Activated CD4-positive, alpha-beta T cell treated with anti-CD3 and anti-CD28 coated beads for 36 hours (primary cell): ENCODE measurements at regions of chr20 and their contacts with region 1.

Region 1: DNA sequence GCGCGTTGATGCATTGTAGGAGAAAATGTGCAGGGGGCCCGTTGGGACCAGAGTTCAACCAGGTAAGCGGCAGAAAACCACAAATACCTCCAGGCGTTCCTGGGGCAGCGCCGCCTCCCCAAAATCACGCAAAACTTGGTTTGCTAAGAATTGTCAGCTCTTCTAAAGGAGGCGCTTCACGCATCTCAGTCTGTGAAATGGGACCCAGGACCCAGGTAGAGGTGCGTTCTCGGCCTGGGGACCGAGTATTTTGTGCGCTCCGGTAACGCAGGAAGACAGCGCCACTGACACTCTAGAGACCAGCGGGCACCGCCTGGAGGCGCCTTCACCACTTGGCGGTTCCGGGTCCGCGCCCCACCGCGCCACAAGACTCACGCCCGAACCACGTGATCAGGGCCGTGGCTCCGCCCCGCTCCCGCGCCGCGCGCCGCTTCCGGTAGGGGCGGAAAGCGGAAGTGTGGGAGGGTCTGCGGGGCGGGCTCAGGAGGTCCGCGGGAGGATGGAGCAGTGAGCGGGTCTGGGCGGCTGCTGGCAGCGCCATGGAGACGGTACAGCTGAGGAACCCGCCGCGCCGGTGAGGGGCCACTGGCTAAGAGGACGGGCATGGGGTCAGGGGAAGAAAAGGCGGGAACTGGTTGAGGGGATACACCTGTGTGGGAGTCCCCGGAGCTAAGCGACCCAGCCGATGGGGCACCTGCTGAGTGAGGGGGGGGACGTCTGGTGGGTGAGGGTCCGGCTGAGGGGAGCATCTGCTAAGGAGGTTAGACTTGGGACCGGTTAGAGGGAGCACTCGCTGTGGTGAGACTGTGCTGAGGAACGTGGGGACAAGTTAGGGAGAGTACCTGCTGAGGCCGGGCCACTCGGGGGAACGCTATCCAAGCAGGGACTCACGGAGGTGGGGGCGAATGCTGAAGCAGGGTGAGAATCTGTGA is at the start of gene STK4:
- DNase-seq: peak; percentile 97
- ATAC-seq: peak; percentile 71
- H3K4me3 Mint-ChIP-seq: peak within 1 kb of the TSS; percentile 94
- H3K27ac Mint-ChIP-seq: peak within 1 kb of the TSS; percentile 98
- H3K4me1 Mint-ChIP-seq: peaks cover 55% of the 10 kb centered on the region
- H3K27me3 Mint-ChIP-seq: no peaks in the 10 kb centered on the region
- total RNA-seq, gene STK4: 156 to 164 TPM

Region 2: GRCh38 chr20:44521484-44522481 is 444.5 kb before region 1 on chr20 and contains the start of gene SERINC3:
- CTCF ChIA-PET with region 1: no interaction called
- POLR2A ChIA-PET with region 1: no interaction called
- intact Hi-C with region 1: loop called in 1 of 2 experiments (anchors 5 kb)
- DNase-seq: peak; percentile 98
- ATAC-seq: peak; percentile 99
- H3K4me3 Mint-ChIP-seq: peak within 1 kb of the TSS; percentile 81
- H3K27ac Mint-ChIP-seq: peak within 1 kb of the TSS; percentile 93
- H3K4me1 Mint-ChIP-seq: peaks cover 55% of the 10 kb centered on the region
- H3K27me3 Mint-ChIP-seq: no peaks in the 10 kb centered on the region
- total RNA-seq, gene SERINC3: 51.9 to 58.5 TPM

Region 3: DNA sequence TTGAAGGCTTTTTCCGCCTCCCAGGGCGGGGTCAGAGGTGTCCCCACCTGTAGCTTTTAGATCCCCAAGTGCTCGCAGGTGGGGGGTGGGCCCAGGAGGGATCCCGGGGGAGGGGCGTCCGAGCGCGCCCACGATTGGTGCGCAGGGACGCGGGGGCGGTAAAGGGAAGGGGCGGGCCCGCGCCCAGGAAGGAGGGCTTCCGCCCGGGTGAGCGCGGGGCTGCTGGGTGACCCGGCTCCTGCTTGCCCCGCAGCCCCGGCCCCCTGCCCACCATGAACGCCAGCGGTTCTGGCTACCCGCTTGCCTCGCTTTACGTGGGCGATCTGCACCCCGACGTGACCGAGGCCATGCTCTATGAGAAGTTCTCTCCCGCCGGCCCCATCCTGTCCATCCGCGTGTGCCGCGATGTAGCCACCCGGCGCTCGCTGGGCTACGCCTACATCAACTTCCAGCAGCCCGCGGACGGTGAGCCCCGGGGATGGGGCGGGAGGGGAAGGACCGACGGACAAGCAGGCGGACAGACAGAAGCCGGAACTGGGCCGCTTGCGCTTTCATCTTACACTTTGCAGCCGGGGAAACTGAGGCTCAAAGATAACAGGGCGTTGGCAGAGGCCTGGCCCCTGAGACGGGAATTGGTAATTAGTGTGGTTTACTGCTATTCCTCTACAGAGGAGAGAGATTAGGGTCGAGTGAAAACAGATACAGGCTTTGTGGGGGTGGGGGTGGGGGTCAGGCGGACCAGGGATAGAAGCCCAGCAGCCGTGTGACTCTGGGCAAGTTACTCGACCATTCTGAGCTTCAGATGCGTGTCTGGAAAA is 56.2 kb before region 1 on chr20 and contains the start of gene PABPC1L:
- CTCF ChIA-PET with region 1: no interaction called
- POLR2A ChIA-PET with region 1: interaction called, 5 read pairs
- intact Hi-C with region 1: loop called in 1 of 2 experiments (anchors 5 kb)
- DNase-seq: peak; percentile 86
- ATAC-seq: peak; percentile 90
- H3K4me3 Mint-ChIP-seq: peak within 1 kb of the TSS; percentile 78
- H3K27ac Mint-ChIP-seq: peak within 1 kb of the TSS; percentile 64
- H3K4me1 Mint-ChIP-seq: peaks cover 34% of the 10 kb centered on the region
- H3K27me3 Mint-ChIP-seq: no peaks in the 10 kb centered on the region
- total RNA-seq, gene PABPC1L: 61.7 to 71.3 TPM

Region 4: DNA sequence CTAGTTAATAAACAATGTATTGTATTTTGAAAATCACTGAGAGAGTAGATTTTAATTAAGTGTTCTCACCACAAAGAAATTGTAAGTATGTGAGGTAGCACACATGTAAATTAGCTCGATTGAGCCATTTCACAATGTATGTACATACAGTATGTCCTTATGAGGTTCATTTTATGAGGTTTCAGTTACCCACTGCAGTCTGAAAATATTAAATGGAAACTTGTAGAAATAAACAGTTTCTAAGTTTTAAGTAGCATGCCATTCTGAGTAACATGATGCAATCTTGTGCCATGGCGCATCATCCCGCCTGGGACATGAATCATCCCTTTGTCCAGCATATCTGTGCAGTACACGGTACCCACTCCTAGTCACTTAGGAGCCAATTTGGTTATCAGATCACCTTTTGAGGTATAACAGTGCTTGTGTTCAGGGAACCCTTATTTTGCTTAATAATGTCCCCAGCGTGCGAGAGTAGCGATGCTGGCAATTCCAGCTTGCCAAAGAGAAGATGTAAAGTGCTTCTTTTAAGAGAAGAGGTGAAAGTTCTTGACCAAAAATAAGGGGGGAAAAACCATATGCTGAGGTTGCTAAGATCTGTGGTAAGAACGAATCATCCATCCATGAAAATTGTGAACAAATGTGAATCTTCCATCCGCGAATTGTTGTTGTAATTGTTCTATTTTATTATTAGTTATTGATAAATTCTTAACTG is 69.9 kb after region 1 on chr20:
- CTCF ChIA-PET with region 1: interaction called, 4 read pairs
- POLR2A ChIA-PET with region 1: no interaction called
- intact Hi-C with region 1: loop called (anchors 2 to 5 kb)
- DNase-seq: peak; percentile 83
- ATAC-seq: peak; percentile 89
- H3K4me3 Mint-ChIP-seq: no peak overlapping the region
- H3K27ac Mint-ChIP-seq: peak overlapping the region; percentile 95
- H3K4me1 Mint-ChIP-seq: peaks cover 80% of the 10 kb centered on the region
- H3K27me3 Mint-ChIP-seq: no peaks in the 10 kb centered on the region

Region 5: GRCh38 chr20:45415774-45416637 is 449.7 kb after region 1 on chr20 and contains the start of gene PIGT:
- CTCF ChIA-PET with region 1: no interaction called
- POLR2A ChIA-PET with region 1: no interaction called
- intact Hi-C with region 1: loop called in 1 of 2 experiments (anchors 5 kb)
- DNase-seq: peak; percentile 93
- ATAC-seq: peak; percentile 93
- H3K4me3 Mint-ChIP-seq: peak within 1 kb of the TSS; percentile 94
- H3K27ac Mint-ChIP-seq: peak within 1 kb of the TSS; percentile 97
- H3K4me1 Mint-ChIP-seq: peaks cover 44% of the 10 kb centered on the region
- H3K27me3 Mint-ChIP-seq: no peaks in the 10 kb centered on the region
- total RNA-seq, gene PIGT: 44.0 to 65.7 TPM

Region 6: GRCh38 chr20:45487231-45487635 is 520.9 kb after region 1 on chr20:
- CTCF ChIA-PET with region 1: no interaction called
- POLR2A ChIA-PET with region 1: no interaction called
- intact Hi-C with region 1: no loop called
- DNase-seq: peak; percentile 22
- ATAC-seq: no peak
- H3K4me3 Mint-ChIP-seq: no peak overlapping the region
- H3K27ac Mint-ChIP-seq: no peak overlapping the region
- H3K4me1 Mint-ChIP-seq: no peaks in the 10 kb centered on the region
- H3K27me3 Mint-ChIP-seq: peaks cover 24% of the 10 kb centered on the region

Region 7: DNA sequence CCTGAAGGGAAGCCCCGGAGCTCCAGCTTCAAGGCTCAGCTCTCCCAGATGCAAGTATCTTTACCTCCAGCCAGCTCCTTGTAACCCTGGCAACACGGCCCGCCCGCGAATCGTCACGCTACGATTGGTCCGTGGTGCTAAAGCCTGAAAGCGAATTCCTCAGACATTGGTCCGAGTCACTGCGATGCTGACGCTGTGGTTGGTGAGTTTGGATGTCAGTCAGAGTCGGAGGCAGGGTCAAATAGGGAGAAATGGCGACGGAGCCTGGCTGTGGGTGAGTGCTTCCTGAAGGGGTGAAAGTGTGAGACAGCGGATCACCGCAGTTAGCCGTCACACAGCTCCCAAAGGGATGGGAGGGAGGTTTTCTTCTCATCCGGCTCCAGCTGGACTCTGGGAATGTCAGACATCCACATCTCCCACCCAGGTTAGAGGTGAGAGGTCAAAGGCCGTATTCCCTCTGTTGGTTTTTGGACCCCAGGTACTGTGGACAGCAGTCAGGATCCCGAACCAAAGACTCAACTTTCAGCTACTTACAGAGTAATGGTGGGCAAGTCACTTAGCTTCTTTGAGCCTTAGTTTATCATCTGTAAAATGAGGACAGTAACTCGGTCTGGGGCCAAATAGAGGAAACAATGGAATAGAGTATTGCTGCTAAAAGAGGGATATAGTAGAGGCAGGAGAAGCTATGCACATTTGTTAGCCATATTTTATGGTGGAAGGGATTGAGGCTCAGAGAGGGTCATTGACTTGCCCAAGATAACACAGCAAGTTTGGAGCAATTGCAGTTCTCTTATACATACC is 914.9 kb after region 1 on chr20 and contains the start of gene ZSWIM1:
- CTCF ChIA-PET with region 1: no interaction called
- POLR2A ChIA-PET with region 1: no interaction called
- intact Hi-C with region 1: loop called in 1 of 2 experiments (anchors 10 kb)
- DNase-seq: peak; percentile 99
- ATAC-seq: peak; percentile 98
- H3K4me3 Mint-ChIP-seq: peak within 1 kb of the TSS; percentile 94
- H3K27ac Mint-ChIP-seq: peak within 1 kb of the TSS; percentile 95
- H3K4me1 Mint-ChIP-seq: peaks cover 42% of the 10 kb centered on the region
- H3K27me3 Mint-ChIP-seq: no peaks in the 10 kb centered on the region
- total RNA-seq, gene ZSWIM1: 9.4 to 10.7 TPM